Aorta (tissue), 5 donors: ENCODE measurements at regions of chr10 and their contacts with region 1.

Region 1: DNA sequence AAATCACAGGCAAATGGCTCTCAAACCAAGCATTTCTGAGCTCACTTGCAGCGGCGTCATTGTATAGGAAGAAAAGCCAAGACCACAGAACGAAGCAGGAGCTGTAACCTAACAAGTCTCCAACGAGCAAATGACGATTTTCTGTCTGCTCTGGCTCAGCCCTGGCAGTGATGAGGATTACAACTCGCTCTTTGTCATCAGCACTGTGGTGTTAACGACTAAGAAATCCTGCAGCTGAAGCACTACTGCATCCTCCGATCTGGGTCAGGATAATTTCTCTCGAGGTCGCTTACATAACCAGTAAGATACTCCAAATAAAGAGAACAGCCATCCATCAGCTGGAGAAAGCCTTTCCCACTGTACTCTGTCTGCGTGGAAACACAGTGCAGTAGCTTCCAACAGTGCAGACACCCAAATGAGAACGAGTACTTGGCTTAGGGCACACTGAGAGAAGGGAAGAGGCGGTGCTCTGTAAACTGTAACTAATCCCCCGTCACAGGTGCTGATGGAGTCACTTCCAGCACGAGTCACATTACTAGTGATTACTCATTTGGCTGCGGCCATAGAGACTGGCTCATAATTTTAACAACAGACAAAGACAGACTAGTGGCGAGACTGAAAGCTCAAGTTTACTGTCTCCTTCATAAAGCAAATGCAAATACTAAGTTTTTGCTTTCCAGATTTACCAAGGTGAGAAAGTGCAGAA is 135.8 kb downstream of the NRBF2 start:
- DNase-seq: peak in 1 of 2 donors; percentile 86
- ATAC-seq: peak; percentile 94
- H3K4me3 ChIP-seq: peak overlapping the region; percentile 71 to 96
- H3K27ac ChIP-seq: peak overlapping the region; percentile 73 to 99
- H3K4me1 ChIP-seq: no peaks in the 10 kb centered on the region
- H3K27me3 ChIP-seq: no peaks in the 10 kb centered on the region

Region 2: DNA sequence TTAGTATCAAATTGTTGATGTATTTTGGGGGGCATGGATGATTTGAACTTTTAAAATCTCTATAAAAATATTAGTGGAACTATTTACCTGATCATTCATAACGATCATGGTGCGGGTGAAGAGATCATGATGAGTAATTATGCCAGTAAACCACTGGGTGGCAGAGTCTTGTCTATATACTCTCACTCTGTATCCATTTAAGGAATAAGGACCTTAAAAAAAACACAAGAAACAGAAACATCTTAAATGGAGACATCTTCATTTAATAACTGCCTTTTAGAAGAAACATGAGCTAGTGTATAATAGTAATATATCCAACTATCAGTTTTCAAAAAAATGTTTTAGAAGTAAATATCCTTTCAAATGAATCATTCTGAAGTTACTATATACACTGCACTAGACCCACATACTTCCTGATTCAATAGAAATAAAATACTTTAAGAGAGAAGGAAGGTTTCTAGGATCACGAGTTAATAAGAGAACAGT is 51.8 kb before region 1 on chr10:
- intact Hi-C with region 1: loop called in 1 of 2 experiments (anchors 10 kb)
- DNase-seq: no peak
- ATAC-seq: peak; percentile 88
- H3K4me3 ChIP-seq: no peak overlapping the region
- H3K27ac ChIP-seq: no peak overlapping the region
- H3K4me1 ChIP-seq: no peaks in the 10 kb centered on the region
- H3K27me3 ChIP-seq: no peaks in the 10 kb centered on the region